ENCODE measurements at regions of chr16 and their contacts with region 1.

Region 1: GRCh38 chr16:70737377-70738082 is 51.7 kb upstream of the MTSS2 start:
- DNase-seq: peak; percentile 96
- H3K4me3 ChIP-seq: no peak overlapping the region
- H3K27ac ChIP-seq: peak overlapping the region; percentile 87 to 99
- H3K4me1 ChIP-seq: peaks cover 26 to 64% of the 10 kb centered on the region in 2 experiments
- H3K27me3 ChIP-seq: no peaks in the 10 kb centered on the region
- CTCF ChIP-seq: no peak
- EP300 ChIP-seq: peak; percentile 27 to 82; a peak in 3 of 4 replicates
- RAD21 ChIP-seq: no peak; the same call in none of the 2 replicates

Region 2: GRCh38 chr16:70589998-70590471 is 147.5 kb before region 1 on chr16:
- CTCF ChIA-PET with region 1: no interaction called
- POLR2A ChIA-PET with region 1: no interaction called
- DNase-seq: peak; percentile 22
- H3K4me3 ChIP-seq: no peak overlapping the region
- H3K27ac ChIP-seq: no peak overlapping the region
- H3K4me1 ChIP-seq: no peaks in the 10 kb centered on the region
- H3K27me3 ChIP-seq: no peaks in the 10 kb centered on the region
- CTCF ChIP-seq: no peak
- EP300 ChIP-seq: no peak
- RAD21 ChIP-seq: no peak

Region 3: DNA sequence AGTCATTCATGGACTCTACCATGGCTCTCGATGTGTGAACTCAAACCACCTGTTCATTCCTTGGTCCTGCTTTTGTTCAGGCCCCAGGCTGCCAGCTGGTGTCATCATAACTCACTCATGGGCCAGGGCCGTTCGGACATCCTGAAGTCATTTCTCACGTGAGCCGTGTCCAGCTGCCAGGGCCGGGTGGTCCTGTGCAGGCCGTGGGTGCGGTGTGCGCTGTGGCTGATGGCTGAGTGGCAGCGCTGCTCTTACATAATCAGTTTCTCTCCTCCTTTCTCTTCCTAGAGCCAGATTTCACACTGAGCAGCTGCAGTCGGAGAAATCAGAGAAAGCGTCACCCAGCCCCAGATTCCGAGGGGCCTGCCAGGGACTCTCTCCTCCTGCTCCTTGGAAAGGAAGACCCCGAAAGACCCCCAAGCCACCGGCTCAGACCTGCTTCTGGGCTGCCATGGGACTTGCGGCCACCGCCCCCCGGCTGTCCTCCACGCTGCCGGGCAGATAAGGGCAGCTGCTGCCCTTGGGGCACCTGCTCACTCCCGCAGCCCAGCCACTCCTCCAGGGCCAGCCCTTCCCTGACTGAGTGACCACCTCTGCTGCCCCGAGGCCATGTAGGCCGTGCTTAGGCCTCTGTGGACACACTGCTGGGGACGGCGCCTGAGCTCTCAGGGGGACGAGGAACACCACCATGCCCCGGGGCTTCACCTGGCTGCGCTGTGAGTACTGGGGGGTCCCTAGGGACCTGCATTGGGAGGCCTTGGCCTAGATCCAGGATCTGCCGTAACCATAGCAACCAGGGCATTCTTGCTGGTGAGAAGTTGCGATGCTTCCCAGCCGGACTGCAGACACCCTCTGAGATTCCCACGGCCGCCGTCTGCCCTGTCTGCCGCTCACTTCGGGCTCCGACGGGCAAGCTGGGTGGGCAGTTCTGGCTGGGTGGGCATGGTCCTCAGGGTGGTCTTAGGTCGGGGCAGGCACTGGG is 91.0 kb before region 1 on chr16 and contains the start of gene IL34:
- CTCF ChIA-PET with region 1: no interaction called
- POLR2A ChIA-PET with region 1: no interaction called
- DNase-seq: peak; percentile 77
- H3K4me3 ChIP-seq: no peak within 1 kb of the TSS
- H3K27ac ChIP-seq: no peak within 1 kb of the TSS; a peak in 1 of 4 replicates
- H3K4me1 ChIP-seq: peaks cover 0 to 18% of the 10 kb centered on the region in 2 experiments; a peak in 1 of 4 replicates
- H3K27me3 ChIP-seq: no peaks in the 10 kb centered on the region
- CTCF ChIP-seq: no peak
- EP300 ChIP-seq: no peak
- RAD21 ChIP-seq: no peak
- polyA plus RNA-seq, gene IL34: 0.18 and 0.19 TPM in 2 replicates

Region 4: GRCh38 chr16:70679666-70680494 is 57.6 kb before region 1 on chr16:
- CTCF ChIA-PET with region 1: interaction called, 27 read pairs
- POLR2A ChIA-PET with region 1: no interaction called
- DNase-seq: peak; percentile 94
- H3K4me3 ChIP-seq: no peak overlapping the region
- H3K27ac ChIP-seq: no peak overlapping the region; a peak in 1 of 4 replicates
- H3K4me1 ChIP-seq: peaks cover 0 to 39% of the 10 kb centered on the region in 2 experiments; a peak in 1 of 4 replicates
- H3K27me3 ChIP-seq: no peaks in the 10 kb centered on the region
- CTCF ChIP-seq: peak; percentile 36
- EP300 ChIP-seq: no peak
- RAD21 ChIP-seq: peak; percentile 47

Region 5: GRCh38 chr16:70685938-70686375 is 51.6 kb before region 1 on chr16 and contains the start of gene MTSS2:
- CTCF ChIA-PET with region 1: interaction called, 27 read pairs
- POLR2A ChIA-PET with region 1: interaction called, 3 read pairs
- DNase-seq: peak; percentile 97
- H3K4me3 ChIP-seq: peak within 1 kb of the TSS; percentile 76 to 97
- H3K27ac ChIP-seq: peak within 1 kb of the TSS; percentile 67 to 81
- H3K4me1 ChIP-seq: peaks cover 24 to 88% of the 10 kb centered on the region in 2 experiments
- H3K27me3 ChIP-seq: no peaks in the 10 kb centered on the region
- CTCF ChIP-seq: no peak
- EP300 ChIP-seq: peak in 1 of 2 experiments; percentile 49; a peak in 1 of 4 replicates
- RAD21 ChIP-seq: no peak
- polyA plus RNA-seq, gene MTSS2: 41.3 and 54.1 TPM in 2 replicates

Region 6: GRCh38 chr16:70703041-70703834 is 34.3 kb before region 1 on chr16:
- CTCF ChIA-PET with region 1: interaction called, 25 read pairs
- POLR2A ChIA-PET with region 1: interaction called, 10 read pairs
- DNase-seq: peak; percentile 88
- H3K4me3 ChIP-seq: no peak overlapping the region
- H3K27ac ChIP-seq: peak overlapping the region; percentile 96
- H3K4me1 ChIP-seq: peaks cover 54 to 73% of the 10 kb centered on the region in 2 experiments; a peak in 3 of 4 replicates
- H3K27me3 ChIP-seq: no peaks in the 10 kb centered on the region
- CTCF ChIP-seq: peak; percentile 57
- EP300 ChIP-seq: peak in 1 of 2 experiments; percentile 44; a peak in 1 of 4 replicates
- RAD21 ChIP-seq: peak; percentile 50

Region 7: GRCh38 chr16:70715055-70715858 is 22.3 kb before region 1 on chr16:
- CTCF ChIA-PET with region 1: interaction called, 8 read pairs
- POLR2A ChIA-PET with region 1: interaction called, 17 read pairs
- DNase-seq: peak; percentile 87
- H3K4me3 ChIP-seq: peak overlapping the region; percentile 24 to 52; a peak in 2 of 4 replicates
- H3K27ac ChIP-seq: peak overlapping the region; percentile 98 to 100
- H3K4me1 ChIP-seq: peaks cover 31 to 69% of the 10 kb centered on the region in 2 experiments
- H3K27me3 ChIP-seq: no peaks in the 10 kb centered on the region
- CTCF ChIP-seq: peak; percentile 41
- EP300 ChIP-seq: peak; percentile 54 to 85; a peak in 3 of 4 replicates
- RAD21 ChIP-seq: no peak; the same call in 1 of the 2 replicates

Region 8: GRCh38 chr16:70725912-70726828 is 11.4 kb before region 1 on chr16:
- CTCF ChIA-PET with region 1: interaction called, 18 read pairs
- POLR2A ChIA-PET with region 1: interaction called, 5 read pairs
- DNase-seq: no peak
- H3K4me3 ChIP-seq: no peak overlapping the region
- H3K27ac ChIP-seq: peak overlapping the region in 1 of 2 experiments; percentile 73; a peak in 1 of 4 replicates
- H3K4me1 ChIP-seq: peaks cover 0 to 34% of the 10 kb centered on the region in 2 experiments; a peak in 1 of 4 replicates
- H3K27me3 ChIP-seq: no peaks in the 10 kb centered on the region
- CTCF ChIP-seq: no peak
- EP300 ChIP-seq: no peak
- RAD21 ChIP-seq: no peak

Region 9: DNA sequence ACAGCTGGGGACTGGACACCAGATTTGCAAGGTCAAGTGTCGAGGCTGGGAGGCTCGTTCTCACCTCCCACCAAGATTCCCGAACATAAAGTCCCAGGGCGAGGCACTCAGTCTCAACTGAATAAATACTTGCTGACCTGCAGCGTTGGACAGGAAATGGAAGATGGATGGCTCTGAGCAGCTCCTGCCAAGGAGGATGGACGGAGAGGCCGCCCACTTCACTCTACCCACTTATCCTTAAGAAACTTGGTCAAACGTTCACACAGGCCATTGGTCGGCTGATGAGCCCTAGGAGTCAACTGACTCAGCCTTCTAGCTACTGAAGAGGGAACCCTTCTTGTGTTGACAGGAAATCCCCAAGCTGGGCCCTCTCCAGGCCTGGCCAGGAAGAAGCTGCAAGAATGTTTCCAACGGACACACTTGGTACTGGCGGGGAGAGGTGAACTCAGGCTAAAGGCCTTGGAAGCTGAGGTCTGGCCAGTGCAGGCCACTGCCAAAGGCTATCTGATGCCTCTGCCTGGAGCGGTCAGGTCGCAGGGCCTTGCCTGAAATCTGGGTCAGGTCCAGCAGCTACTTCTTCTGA is 13.5 kb after region 1 on chr16:
- CTCF ChIA-PET with region 1: interaction called, 11 read pairs
- POLR2A ChIA-PET with region 1: interaction called, 4 read pairs
- DNase-seq: no peak
- H3K4me3 ChIP-seq: no peak overlapping the region
- H3K27ac ChIP-seq: no peak overlapping the region
- H3K4me1 ChIP-seq: peaks cover 32 to 34% of the 10 kb centered on the region in 2 experiments; a peak in 3 of 4 replicates
- H3K27me3 ChIP-seq: no peaks in the 10 kb centered on the region
- CTCF ChIP-seq: no peak
- EP300 ChIP-seq: no peak
- RAD21 ChIP-seq: no peak

Region 10: DNA sequence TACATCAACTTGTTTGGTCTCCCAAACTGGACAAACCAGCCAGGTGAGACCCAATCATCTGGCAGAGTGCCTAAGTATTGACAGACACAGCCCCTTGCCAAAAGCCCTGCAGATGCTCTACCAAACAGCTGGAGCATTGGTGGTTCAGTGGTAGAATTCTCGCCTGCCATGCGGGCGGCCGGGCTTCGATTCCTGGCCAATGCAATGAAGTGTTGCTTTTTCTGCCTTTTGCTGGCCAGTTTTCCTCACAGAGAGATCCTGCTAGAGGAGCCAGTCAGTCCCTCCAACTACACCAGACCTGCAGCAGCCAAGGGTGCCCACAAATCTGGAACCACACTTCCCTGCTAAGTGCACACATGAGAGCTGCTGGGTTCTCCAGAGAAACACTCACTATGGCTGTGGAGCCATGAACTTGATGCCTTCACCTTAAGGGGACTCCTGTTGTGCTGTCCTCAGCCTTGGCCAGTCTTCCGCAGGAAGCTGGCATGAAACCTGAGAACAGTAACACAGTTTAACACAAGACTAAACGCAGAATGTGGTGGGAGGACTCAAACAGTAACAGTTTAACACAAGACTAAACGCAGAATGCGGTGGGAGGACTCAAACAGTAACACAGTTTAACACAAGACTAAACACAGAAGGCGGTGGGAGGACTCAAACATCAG is 51.2 kb after region 1 on chr16:
- CTCF ChIA-PET with region 1: no interaction called
- POLR2A ChIA-PET with region 1: no interaction called
- DNase-seq: no peak
- H3K4me3 ChIP-seq: no peak overlapping the region
- H3K27ac ChIP-seq: no peak overlapping the region
- H3K4me1 ChIP-seq: no peaks in the 10 kb centered on the region
- H3K27me3 ChIP-seq: no peaks in the 10 kb centered on the region
- CTCF ChIP-seq: no peak
- EP300 ChIP-seq: no peak
- RAD21 ChIP-seq: no peak

Measured in SK-N-SH (cell line).